Transverse colon (tissue), 4 donors: ENCODE measurements at regions of chr9 and their contacts with region 1.

Region 1: DNA sequence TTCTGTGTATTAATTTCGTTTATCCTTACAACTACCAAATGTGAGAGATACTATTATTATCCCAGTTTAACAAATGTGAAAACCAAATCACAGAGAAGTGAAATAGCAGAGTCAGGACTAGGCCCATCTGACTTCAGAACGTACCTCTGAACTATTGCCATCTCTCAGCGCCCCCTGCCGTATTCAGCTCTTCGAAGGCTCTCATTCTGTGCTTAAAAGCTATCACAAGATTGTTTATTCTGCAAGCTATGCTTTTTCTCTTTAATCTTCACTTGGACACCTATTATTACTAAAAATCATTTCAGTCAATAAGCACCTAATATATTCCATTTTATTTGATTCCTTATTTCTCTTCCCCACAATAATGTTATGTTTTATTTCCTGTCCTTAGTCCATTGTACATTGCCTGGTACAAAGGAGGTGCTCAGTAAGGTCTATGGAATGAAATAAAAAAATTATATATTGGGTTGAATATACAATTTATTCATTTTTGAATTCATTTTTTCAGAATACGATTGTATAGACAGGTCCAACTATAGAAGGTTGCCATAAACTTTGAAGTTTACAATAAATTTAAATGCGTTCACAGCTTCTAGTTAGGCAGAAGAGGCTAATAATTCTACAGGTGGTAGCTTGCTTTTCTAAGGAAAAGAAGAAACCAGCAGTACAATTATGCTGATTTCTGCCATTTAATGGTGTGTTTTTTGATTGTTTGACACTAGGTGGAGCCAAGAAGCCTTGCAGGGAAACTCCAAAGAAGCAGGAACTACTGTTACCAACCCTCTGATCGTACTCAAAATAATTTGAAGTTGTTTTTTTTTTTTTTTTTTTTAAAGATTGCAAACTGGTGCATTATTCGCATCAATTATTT is 202.2 kb upstream of the DMRTA1 start:
- DNase-seq: peak; percentile 37
- H3K4me3 ChIP-seq: no peak overlapping the region
- H3K27ac ChIP-seq: no peak overlapping the region
- H3K4me1 ChIP-seq: peaks cover 0 to 3% (median 0%) of the 10 kb centered on the region in 4 donors
- H3K27me3 ChIP-seq: peaks cover 7% of the 10 kb centered on the region
- CTCF ChIP-seq: peak; percentile 32 to 46 (median 39)
- EP300 ChIP-seq: no peak
- POLR2A ChIP-seq: no peak

Region 2: GRCh38 chr9:21995177-21996086 is 248.9 kb before region 1 on chr9:
- in situ Hi-C with region 1: loop called in 3 of 4 experiments (anchors 25 kb)
- intact Hi-C with region 1: no loop called
- DNase-seq: peak; percentile 87
- H3K4me3 ChIP-seq: peak overlapping the region; percentile 65 to 87 (median 77)
- H3K27ac ChIP-seq: peak overlapping the region; percentile 84 to 89 (median 86)
- H3K4me1 ChIP-seq: peaks cover 0 to 22% (median 12%) of the 10 kb centered on the region in 4 donors
- H3K27me3 ChIP-seq: peaks cover 49% of the 10 kb centered on the region
- CTCF ChIP-seq: peak in 2 of 5 experiments; percentile 20 to 23
- EP300 ChIP-seq: no peak
- POLR2A ChIP-seq: peak; percentile 45

Region 3: GRCh38 chr9:22008736-22009562 is 235.4 kb before region 1 on chr9 and contains the start of gene CDKN2B:
- in situ Hi-C with region 1: loop called in 1 of 4 experiments (anchors 25 kb)
- intact Hi-C with region 1: no loop called
- DNase-seq: peak; percentile 97
- H3K4me3 ChIP-seq: peak within 1 kb of the TSS; percentile 55 to 76 (median 66)
- H3K27ac ChIP-seq: peak within 1 kb of the TSS; percentile 90 to 95 (median 93)
- H3K4me1 ChIP-seq: peaks cover 0 to 34% (median 8%) of the 10 kb centered on the region in 4 donors
- H3K27me3 ChIP-seq: peaks cover 53% of the 10 kb centered on the region
- CTCF ChIP-seq: peak; percentile 88 to 98 (median 97)
- EP300 ChIP-seq: no peak
- POLR2A ChIP-seq: peak; percentile 95
- total RNA-seq, gene CDKN2B: 36.8 to 430 (median 265) TPM

Region 4: GRCh38 chr9:22446950-22447617 is 202.7 kb after region 1 on chr9:
- in situ Hi-C with region 1: loop called in 2 of 4 experiments (anchors 10 kb)
- intact Hi-C with region 1: no loop called
- DNase-seq: peak; percentile 65
- H3K4me3 ChIP-seq: peak overlapping the region; percentile 51 to 92 (median 74)
- H3K27ac ChIP-seq: peak overlapping the region; percentile 84 to 89 (median 86)
- H3K4me1 ChIP-seq: peaks cover 0 to 22% (median 6%) of the 10 kb centered on the region in 4 donors
- H3K27me3 ChIP-seq: peaks cover 53% of the 10 kb centered on the region
- CTCF ChIP-seq: peak in 1 of 5 experiments; percentile 10
- EP300 ChIP-seq: no peak
- POLR2A ChIP-seq: peak; percentile 18

Region 5: DNA sequence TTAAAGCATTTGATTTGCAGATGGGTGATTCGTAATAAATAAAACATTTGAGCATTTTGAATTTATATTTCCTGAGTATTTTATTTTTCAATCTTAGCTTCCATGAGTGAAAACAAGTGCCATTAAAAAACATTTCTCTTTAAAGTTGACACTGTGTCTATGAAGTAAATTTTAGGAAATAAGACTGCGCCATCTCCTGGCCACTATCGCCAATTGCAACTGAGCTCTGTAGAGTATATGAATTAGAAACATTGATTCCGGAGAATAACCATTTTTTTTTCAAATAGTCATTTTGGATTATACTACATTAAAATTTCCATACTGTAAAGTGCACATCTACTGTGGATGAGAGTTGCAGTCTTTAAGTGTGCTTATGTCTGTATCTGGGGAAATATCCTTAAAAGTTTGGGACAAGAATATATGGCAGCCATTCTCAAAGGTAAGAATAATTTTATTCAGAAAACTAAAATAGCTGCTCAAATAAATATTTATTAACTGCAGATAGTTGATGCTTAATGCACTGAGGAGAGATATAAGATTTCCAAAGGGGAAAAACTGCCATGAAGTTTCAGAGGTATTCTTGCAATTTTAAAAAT is 208.1 kb after region 1 on chr9:
- in situ Hi-C with region 1: loop called in 2 of 4 experiments (anchors 10 kb)
- intact Hi-C with region 1: no loop called
- DNase-seq: peak; percentile 54
- H3K4me3 ChIP-seq: no peak overlapping the region
- H3K27ac ChIP-seq: no peak overlapping the region
- H3K4me1 ChIP-seq: peaks cover 0 to 12% (median 2%) of the 10 kb centered on the region in 4 donors
- H3K27me3 ChIP-seq: peaks cover 4% of the 10 kb centered on the region
- CTCF ChIP-seq: peak; percentile 72 to 85 (median 82)
- EP300 ChIP-seq: no peak
- POLR2A ChIP-seq: no peak